PC-9 (cell line): ENCODE measurements at regions of chr12 and their contacts with region 1.

Region 1: GRCh38 chr12:115916910-115917668 is 360.4 kb downstream of the MED13L start:
- DNase-seq: peak in 1 of 2 experiments; percentile 71
- H3K4me3 ChIP-seq: no peak overlapping the region
- H3K27ac ChIP-seq: no peak overlapping the region
- H3K4me1 ChIP-seq: no peaks in the 10 kb centered on the region
- H3K27me3 ChIP-seq: peaks cover 6% of the 10 kb centered on the region; the same call in 1 of the 2 replicates
- CTCF ChIP-seq: peak; percentile 92

Region 2: DNA sequence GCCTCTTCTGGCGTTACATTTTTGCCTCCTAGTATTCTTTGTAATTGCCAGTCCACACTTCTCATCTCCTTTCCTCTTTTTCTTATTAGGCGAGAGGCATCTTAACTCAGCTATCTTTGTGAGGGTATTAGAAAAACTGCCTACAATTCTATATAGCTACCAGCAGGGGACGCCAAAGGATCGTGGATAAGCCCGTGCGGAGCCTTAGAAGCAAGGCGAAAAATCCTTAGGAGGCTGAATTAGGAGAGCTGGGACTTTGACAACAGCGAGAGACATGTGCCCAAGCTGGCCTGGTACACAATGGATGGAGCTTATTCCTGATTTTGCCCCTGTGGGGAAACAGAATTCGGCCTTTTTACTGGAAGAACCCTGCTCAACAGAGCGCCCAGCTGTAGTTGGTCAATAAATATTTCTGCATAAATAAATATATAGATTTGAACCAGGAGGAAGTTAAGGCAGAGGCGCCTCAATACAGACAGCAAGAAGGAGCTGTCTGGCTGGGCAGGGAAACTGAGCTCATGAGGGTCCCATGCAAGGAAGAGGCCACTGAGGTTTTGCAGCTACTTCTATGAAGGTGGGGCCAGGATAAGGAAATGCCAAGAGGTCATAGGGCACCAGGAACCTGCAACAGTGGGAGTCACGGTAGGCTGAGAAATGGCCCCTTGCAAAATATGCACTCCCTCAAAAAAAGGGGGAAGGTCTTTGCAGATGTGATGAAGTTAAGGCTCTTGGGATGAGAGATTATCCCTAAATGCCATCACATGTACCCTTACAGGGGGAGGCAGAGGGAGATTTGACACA is 1936.4 kb before region 1 on chr12:
- CTCF ChIA-PET with region 1: no interaction called
- POLR2A ChIA-PET with region 1: no interaction called
- intact Hi-C with region 1: loop called (anchors 1 kb)
- DNase-seq: peak in 1 of 2 experiments; percentile 18
- H3K4me3 ChIP-seq: no peak overlapping the region
- H3K27ac ChIP-seq: no peak overlapping the region
- H3K4me1 ChIP-seq: no peaks in the 10 kb centered on the region
- H3K27me3 ChIP-seq: peaks cover 44% of the 10 kb centered on the region
- CTCF ChIP-seq: peak; percentile 99

Region 3: GRCh38 chr12:114662512-114663177 is 1254.4 kb before region 1 on chr12:
- CTCF ChIA-PET with region 1: interaction called, 3 read pairs
- POLR2A ChIA-PET with region 1: no interaction called
- intact Hi-C with region 1: loop called (anchors 1 kb)
- DNase-seq: peak; percentile 58 to 60
- H3K4me3 ChIP-seq: no peak overlapping the region
- H3K27ac ChIP-seq: no peak overlapping the region
- H3K4me1 ChIP-seq: no peaks in the 10 kb centered on the region
- H3K27me3 ChIP-seq: peaks cover 8% of the 10 kb centered on the region; the same call in 1 of the 2 replicates
- CTCF ChIP-seq: peak; percentile 91

Region 4: DNA sequence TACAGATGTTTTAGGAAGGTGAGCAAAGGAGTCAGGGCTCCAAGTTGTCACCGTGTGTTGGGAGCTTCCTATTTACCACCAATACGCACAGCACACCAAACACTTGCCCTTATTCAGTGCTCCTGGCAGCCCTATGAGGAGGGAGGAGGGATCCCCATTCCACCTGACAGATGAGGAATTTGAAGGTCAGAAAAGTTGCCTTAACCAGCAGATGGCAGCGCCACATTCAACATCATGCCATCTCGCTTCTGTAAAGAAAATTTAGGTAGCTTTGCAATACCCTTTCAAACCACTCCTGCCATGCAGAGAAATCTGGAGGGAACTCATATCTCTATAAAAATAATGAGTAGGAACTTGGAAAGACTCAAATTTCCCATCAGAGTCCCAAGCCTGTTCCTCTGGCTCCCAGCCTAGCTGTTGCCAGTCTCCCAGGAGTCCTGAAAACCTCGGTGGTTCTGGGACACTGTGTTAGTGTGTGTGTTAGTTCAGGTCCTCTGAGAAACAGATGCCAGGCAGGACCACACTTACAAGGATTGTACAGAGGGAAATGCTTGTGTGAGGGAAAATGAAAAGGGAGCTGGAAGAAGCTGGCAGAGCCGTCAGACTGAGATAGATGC is 50.1 kb before region 1 on chr12:
- CTCF ChIA-PET with region 1: no interaction called
- POLR2A ChIA-PET with region 1: no interaction called
- intact Hi-C with region 1: loop called (anchors 1 kb)
- DNase-seq: peak in 1 of 2 experiments; percentile 4
- H3K4me3 ChIP-seq: no peak overlapping the region
- H3K27ac ChIP-seq: no peak overlapping the region
- H3K4me1 ChIP-seq: peaks cover 11% of the 10 kb centered on the region
- H3K27me3 ChIP-seq: peaks cover 34% of the 10 kb centered on the region
- CTCF ChIP-seq: peak; percentile 66

Region 5: DNA sequence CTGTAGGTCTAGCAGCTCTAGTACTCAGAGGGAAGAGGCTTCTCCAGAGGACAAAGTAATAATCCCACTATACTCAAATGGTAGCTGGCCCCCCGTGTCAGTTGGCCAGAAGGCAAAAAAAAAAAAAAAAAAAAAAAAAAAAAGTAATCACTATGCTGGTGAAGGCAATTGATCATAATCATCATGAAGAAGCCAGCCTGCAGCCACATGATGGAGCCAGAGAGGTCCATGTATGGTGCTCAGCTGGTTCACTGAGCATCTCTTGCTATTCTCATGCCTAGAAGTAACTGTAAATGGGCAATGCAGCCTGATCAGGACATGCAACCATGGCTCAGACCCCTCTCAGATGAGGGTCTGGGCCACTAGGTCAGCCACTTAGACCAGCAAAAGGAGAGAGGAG is 18.4 kb before region 1 on chr12:
- CTCF ChIA-PET with region 1: no interaction called
- POLR2A ChIA-PET with region 1: no interaction called
- intact Hi-C with region 1: no loop called
- DNase-seq: no peak
- H3K4me3 ChIP-seq: no peak overlapping the region
- H3K27ac ChIP-seq: no peak overlapping the region
- H3K4me1 ChIP-seq: no peaks in the 10 kb centered on the region
- H3K27me3 ChIP-seq: peaks cover 77% of the 10 kb centered on the region
- CTCF ChIP-seq: no peak

Region 6: DNA sequence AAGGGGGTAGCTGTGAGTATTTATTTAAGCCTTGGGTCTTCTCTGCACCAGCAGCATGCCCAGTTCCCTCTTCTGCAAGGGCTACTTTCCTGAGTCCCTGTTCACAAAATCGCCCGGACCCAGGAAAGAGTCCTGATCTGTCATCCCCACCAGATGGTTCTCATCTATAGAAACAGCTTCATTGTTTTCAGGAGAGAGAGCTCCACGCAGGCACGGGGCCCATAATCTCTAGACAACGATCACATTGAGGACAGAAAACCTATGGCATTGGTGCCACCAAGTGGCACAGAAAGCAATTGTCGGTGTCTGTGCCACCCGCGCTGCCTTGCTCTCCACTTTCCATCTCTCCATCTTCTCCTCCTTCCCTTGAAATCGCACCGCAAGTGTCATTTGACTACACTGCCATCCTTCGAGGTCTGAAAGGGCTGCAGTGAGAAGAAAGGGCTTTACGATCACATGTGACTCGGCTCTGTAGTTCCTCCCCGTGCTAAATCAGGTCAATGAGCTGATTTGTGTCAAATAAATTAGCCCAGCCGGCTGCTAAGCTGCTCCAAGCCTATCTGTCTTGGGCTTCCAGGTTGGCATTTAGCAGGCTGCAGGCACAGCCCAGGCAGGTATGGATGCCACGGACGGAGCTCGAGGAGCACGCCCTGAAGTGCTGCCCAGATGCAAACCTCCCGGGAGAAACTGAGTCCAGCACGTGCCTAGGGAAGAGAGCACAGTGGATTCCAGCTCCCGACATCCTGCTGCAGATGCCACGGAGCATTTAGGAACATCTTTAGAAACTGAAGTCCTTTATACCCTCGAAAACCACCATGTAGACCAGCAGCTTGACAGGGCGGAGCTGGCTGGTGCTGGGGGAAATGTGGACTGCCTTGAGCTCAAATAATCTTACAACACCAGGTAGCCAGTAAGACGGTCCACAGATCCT is 792.0 kb after region 1 on chr12:
- CTCF ChIA-PET with region 1: no interaction called
- POLR2A ChIA-PET with region 1: no interaction called
- intact Hi-C with region 1: loop called (anchors 5 kb)
- DNase-seq: peak; percentile 54 to 60
- H3K4me3 ChIP-seq: peak overlapping the region; percentile 30; the same call in 1 of the 2 replicates
- H3K27ac ChIP-seq: no peak overlapping the region
- H3K4me1 ChIP-seq: no peaks in the 10 kb centered on the region
- H3K27me3 ChIP-seq: no peaks in the 10 kb centered on the region
- CTCF ChIP-seq: peak; percentile 78